Activated T-helper 1 cell treated with anti-CD3 and anti-CD28 coated beads, Interleukin-12 subunit alpha, Interleukin-12 subunit beta, Interleukin-2, Interleukin-4 antibody, amounts not matched to agents 30 ng/mL and 10 ng/mL and 1 ng/mL, durations not matched to agents 14 hours and 24 hours and 36 hours (primary cell): ENCODE measurements at regions of chr16 and their contacts with region 1.

Region 1: GRCh38 chr16:31094424-31095120 is at the start of gene VKORC1:
- DNase-seq: peak; percentile 84
- H3K4me3 Mint-ChIP-seq: peak within 1 kb of the TSS; percentile 95
- H3K27ac Mint-ChIP-seq: peak within 1 kb of the TSS; percentile 82
- H3K4me1 Mint-ChIP-seq: peaks cover 27% of the 10 kb centered on the region
- H3K27me3 Mint-ChIP-seq: no peaks in the 10 kb centered on the region
- total RNA-seq, gene VKORC1: 47.3 and 53.0 TPM in 2 replicates

Region 2: GRCh38 chr16:30984669-30985400 is 109.7 kb before region 1 on chr16 and contains the start of gene HSD3B7:
- intact Hi-C with region 1: loop called (anchors 1 kb)
- DNase-seq: peak; percentile 73
- H3K4me3 Mint-ChIP-seq: peak within 1 kb of the TSS; percentile 7
- H3K27ac Mint-ChIP-seq: no peak within 1 kb of the TSS
- H3K4me1 Mint-ChIP-seq: no peaks in the 10 kb centered on the region
- H3K27me3 Mint-ChIP-seq: no peaks in the 10 kb centered on the region
- total RNA-seq, gene HSD3B7: 2.1 and 3.3 TPM in 2 replicates

Region 3: GRCh38 chr16:30997000-30997886 is 97.3 kb before region 1 on chr16:
- intact Hi-C with region 1: loop called (anchors 1 kb)
- DNase-seq: peak; percentile 66
- H3K4me3 Mint-ChIP-seq: peak overlapping the region; percentile 74
- H3K27ac Mint-ChIP-seq: peak overlapping the region; percentile 44
- H3K4me1 Mint-ChIP-seq: peaks cover 11% of the 10 kb centered on the region
- H3K27me3 Mint-ChIP-seq: peaks cover 18% of the 10 kb centered on the region

Region 4: GRCh38 chr16:31032736-31033708 is 61.5 kb before region 1 on chr16 and contains the start of gene STX4:
- intact Hi-C with region 1: loop called (anchors 1 kb)
- DNase-seq: peak; percentile 97
- H3K4me3 Mint-ChIP-seq: peak within 1 kb of the TSS; percentile 95
- H3K27ac Mint-ChIP-seq: peak within 1 kb of the TSS; percentile 92
- H3K4me1 Mint-ChIP-seq: peaks cover 24% of the 10 kb centered on the region
- H3K27me3 Mint-ChIP-seq: no peaks in the 10 kb centered on the region
- total RNA-seq, gene STX4: 56.4 and 58.7 TPM in 2 replicates

Region 5: DNA sequence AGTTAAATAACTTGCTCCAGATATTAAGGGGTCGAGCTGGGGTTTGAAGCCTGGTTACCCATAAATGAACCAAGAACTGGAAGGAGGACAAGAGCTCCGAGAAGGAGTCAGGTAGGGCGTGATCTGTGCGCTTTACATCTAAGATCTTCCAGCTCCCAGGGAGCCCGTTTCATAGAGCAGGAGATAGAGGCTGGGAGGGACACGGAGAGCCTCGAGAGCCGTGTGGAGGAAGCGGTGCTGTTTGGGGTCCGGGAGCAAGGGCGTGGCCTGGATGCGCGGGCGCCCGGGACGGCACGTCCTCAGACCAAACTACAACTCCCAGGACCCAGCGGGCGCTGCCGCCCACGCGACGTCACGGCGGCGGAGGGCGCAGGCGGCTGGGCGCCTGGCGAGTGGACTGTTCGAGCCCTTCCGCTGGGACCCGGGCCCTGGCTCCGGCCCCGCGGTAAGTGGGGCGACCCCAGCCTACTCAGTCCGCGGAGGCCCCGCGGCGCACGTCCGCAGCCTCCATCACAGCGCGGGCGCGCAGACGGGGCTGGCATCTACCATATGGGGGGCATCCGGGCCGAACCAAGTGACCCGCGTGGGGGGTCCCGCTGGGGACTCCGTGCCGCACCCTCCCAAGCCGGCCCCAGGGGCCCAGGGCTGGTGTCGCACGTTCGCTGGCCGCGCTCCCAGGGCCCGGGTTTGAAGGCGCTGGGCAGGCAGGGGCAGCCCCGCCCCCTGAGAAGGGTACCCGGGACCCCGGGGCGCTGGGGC is 13.6 kb after region 1 on chr16 and contains the start of gene BCKDK:
- intact Hi-C with region 1: loop called (anchors 2 kb)
- DNase-seq: peak; percentile 69
- H3K4me3 Mint-ChIP-seq: peak within 1 kb of the TSS; percentile 84
- H3K27ac Mint-ChIP-seq: peak within 1 kb of the TSS; percentile 86
- H3K4me1 Mint-ChIP-seq: peaks cover 22% of the 10 kb centered on the region
- H3K27me3 Mint-ChIP-seq: no peaks in the 10 kb centered on the region
- total RNA-seq, gene BCKDK: 43.6 and 44.8 TPM in 2 replicates

Region 6: GRCh38 chr16:31117391-31118197 is 23.0 kb after region 1 on chr16 and contains the start of gene KAT8:
- intact Hi-C with region 1: loop called (anchors 1 kb)
- DNase-seq: peak; percentile 95
- H3K4me3 Mint-ChIP-seq: peak within 1 kb of the TSS; percentile 88
- H3K27ac Mint-ChIP-seq: peak within 1 kb of the TSS; percentile 92
- H3K4me1 Mint-ChIP-seq: peaks cover 19% of the 10 kb centered on the region
- H3K27me3 Mint-ChIP-seq: no peaks in the 10 kb centered on the region
- total RNA-seq, gene KAT8: 55.4 and 58.2 TPM in 2 replicates